ENCODE measurements at regions of chr22 and their contacts with region 1.

Region 1: DNA sequence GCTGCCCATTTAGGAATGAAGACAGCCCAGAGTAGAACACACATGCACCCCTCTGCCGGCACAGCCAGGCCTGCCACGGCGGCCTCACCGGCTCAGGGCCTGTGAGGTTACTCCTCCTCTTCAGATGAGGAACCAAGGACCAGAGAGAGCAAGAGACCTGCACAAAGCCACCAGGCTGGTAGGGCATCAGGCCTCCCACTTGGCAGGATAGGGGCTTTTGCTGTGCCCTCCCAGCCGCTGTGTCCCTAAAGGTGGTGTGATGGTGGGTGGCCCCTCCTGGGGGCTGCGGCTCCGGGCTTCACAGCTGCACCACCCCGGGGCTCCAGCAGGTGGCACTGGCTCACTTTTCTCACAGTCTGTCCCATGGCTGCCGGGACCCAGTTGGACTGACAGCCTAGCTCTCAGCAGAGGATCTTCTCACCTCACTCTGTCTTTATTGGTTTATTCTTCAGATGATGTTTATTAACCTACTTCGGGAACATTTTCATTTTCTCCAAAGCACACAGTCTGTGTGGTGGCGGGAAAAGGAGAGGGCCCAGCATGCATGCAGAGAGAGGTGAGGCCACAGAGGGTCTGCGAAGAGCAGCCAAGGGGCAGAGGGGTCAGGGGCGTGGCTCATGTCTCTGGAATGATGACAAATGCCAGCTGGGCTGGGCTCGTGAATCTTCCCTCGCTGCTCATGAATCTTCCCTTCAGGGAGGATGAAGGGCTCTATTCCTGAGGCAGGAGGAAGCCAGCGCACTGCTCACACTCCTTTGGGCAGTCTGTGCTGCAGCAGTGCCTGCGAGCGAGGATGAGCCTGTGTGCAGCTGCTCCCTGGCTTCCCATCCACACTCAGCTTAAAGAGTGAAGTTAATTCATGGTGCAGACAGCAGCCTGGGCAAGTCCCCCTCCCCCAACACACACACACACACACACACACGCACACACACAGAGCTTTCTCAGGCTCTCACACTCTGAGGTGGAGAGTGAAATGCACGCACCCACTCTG is 101.1 kb upstream of the PITPNB start:
- DNase-seq: peak; percentile 21
- ATAC-seq: peak; percentile 97
- H3K4me3 ChIP-seq: no peak overlapping the region
- H3K27ac ChIP-seq: no peak overlapping the region
- H3K4me1 ChIP-seq: peaks cover 0 to 6% of the 10 kb centered on the region in 2 experiments; a peak in 1 of 4 replicates
- H3K27me3 ChIP-seq: peaks cover 7% of the 10 kb centered on the region; the same call in 1 of the 2 replicates
- CTCF ChIP-seq: peak; percentile 48 to 96 (median 95)
- POLR2A ChIP-seq: no peak
- RAD21 ChIP-seq: peak; percentile 70

Region 2: DNA sequence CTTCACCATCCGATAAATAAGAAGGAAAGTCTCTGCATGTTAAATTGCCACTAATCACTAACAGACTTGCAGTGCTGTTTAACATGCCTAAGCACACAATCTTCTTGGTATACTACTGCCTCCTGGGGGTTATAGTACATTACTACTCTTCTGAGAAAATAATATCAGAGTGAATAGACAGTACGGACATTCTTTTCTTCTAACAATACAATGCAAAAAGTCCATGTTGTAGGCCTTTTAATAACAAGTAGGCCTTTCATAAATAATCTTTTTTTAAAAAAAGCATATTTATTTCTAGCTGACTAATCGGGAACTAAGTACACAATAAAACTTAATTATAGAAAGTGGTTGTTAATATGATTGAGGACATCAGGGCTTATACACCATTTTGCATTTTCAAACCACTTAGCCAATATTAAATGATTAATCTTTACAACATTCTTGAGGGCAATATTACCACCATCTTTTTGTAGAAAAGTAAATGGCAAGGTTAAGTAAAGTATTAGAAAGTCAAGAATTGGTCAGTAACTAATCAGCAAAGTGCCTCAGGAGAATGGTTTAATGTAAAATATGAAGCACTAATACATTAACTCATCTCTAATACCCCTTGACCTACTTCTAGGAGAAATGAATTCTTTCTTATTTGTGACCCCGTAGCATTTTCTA is 574.8 kb after region 1 on chr22:
- CTCF ChIA-PET with region 1: interaction called, 7 read pairs
- POLR2A ChIA-PET with region 1: no interaction called
- RAD21 ChIA-PET with region 1: interaction called in 1 of 2 experiments, 5 read pairs
- intact Hi-C with region 1: loop called (anchors 1 kb)
- DNase-seq: peak; percentile 35
- ATAC-seq: peak; percentile 94
- H3K4me3 ChIP-seq: no peak overlapping the region
- H3K27ac ChIP-seq: no peak overlapping the region
- H3K4me1 ChIP-seq: no peaks in the 10 kb centered on the region
- H3K27me3 ChIP-seq: no peaks in the 10 kb centered on the region
- CTCF ChIP-seq: peak; percentile 63 to 82 (median 66); a peak in 5 of 6 replicates
- POLR2A ChIP-seq: no peak
- RAD21 ChIP-seq: peak; percentile 71